ENCODE measurements at regions of chr1 and their contacts with region 1.

Region 1: GRCh38 chr1:157878059-157878458 is 36.5 kb upstream of the CD5L start:
- H3K4me3 Mint-ChIP-seq: no peak overlapping the region
- H3K27ac Mint-ChIP-seq: no peak overlapping the region
- H3K4me1 Mint-ChIP-seq: peaks cover 25% of the 10 kb centered on the region
- H3K27me3 Mint-ChIP-seq: peaks cover 17% of the 10 kb centered on the region

Region 2: GRCh38 chr1:157849229-157849875 is 28.7 kb before region 1 on chr1:
- intact Hi-C with region 1: no loop called
- H3K4me3 Mint-ChIP-seq: no peak overlapping the region
- H3K27ac Mint-ChIP-seq: peak overlapping the region; percentile 43
- H3K4me1 Mint-ChIP-seq: peaks cover 29% of the 10 kb centered on the region
- H3K27me3 Mint-ChIP-seq: no peaks in the 10 kb centered on the region

Region 3: DNA sequence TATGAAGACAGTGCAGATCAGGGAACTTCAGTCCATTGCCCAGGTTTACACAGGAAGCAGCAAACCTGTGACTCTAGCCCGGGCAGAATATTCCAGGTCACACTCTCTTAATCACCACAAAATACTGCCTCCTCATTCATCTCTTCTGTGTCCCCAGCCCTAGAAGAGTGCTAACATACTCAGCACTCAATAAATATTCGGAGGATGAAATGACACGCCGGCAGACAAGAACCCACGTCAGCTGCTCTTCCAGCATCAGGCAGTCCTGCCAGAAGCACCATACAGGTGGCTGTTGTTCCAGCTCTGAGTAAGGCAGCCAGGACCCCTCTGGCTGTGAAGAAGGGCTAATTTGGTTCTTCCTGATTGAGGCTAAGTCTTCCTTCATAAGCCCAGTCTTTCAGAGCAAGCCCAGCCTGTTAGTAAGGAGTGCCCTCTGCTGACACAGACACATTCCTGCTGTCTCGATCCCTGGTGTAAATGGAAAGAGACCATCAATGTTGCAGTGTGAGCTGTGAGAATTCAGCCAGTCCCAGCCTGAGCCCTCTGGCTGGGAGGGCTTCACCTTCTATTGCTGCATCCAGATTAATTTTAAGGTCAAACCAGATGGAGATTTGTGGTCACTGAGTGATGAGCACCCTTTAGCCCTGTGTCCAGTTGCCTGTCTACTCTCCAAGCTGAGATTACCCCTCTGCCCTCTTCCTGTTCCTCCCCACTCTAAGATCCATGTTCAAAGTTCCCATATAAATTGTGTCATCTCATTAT is 70.4 kb after region 1 on chr1:
- intact Hi-C with region 1: loop called (anchors 1 kb)
- H3K4me3 Mint-ChIP-seq: no peak overlapping the region
- H3K27ac Mint-ChIP-seq: no peak overlapping the region
- H3K4me1 Mint-ChIP-seq: peaks cover 56% of the 10 kb centered on the region
- H3K27me3 Mint-ChIP-seq: peaks cover 22% of the 10 kb centered on the region

Region 4: GRCh38 chr1:158035976-158036583 is 158.0 kb after region 1 on chr1:
- intact Hi-C with region 1: loop called (anchors 5 kb)
- H3K4me3 Mint-ChIP-seq: no peak overlapping the region
- H3K27ac Mint-ChIP-seq: no peak overlapping the region
- H3K4me1 Mint-ChIP-seq: peaks cover 10% of the 10 kb centered on the region
- H3K27me3 Mint-ChIP-seq: peaks cover 25% of the 10 kb centered on the region

Region 5: GRCh38 chr1:158075078-158075477 is 197.0 kb after region 1 on chr1:
- intact Hi-C with region 1: no loop called
- H3K4me3 Mint-ChIP-seq: no peak overlapping the region
- H3K27ac Mint-ChIP-seq: no peak overlapping the region
- H3K4me1 Mint-ChIP-seq: no peaks in the 10 kb centered on the region
- H3K27me3 Mint-ChIP-seq: peaks cover 12% of the 10 kb centered on the region

Measured in dendritic cell treated with granulocyte-macrophage colony-stimulating factor and Interleukin-4, amounts not matched to agents 40 ng/mL and 50 ng/mL, for 4 days (primary cell).